Ovary (tissue), 10 donors: ENCODE measurements at regions of chr2 and their contacts with region 1.

Region 1: GRCh38 chr2:240851078-240851991 is 17.3 kb upstream of the AGXT start:
- DNase-seq: peak; percentile 76 to 90 (median 89)
- H3K4me3 ChIP-seq: no peak overlapping the region
- H3K27ac ChIP-seq: no peak overlapping the region
- H3K4me1 ChIP-seq: no peaks in the 10 kb centered on the region
- H3K27me3 ChIP-seq: no peaks in the 10 kb centered on the region
- CTCF ChIP-seq: peak; percentile 84 to 98 (median 86)
- EP300 ChIP-seq: no peak
- POLR2A ChIP-seq: no peak

Region 2: GRCh38 chr2:240560480-240561326 is 290.6 kb before region 1 on chr2:
- intact Hi-C with region 1: no loop called
- DNase-seq: peak; percentile 100
- H3K4me3 ChIP-seq: peak overlapping the region; percentile 98
- H3K27ac ChIP-seq: peak overlapping the region; percentile 97 to 98
- H3K4me1 ChIP-seq: peaks cover 23% of the 10 kb centered on the region
- H3K27me3 ChIP-seq: no peaks in the 10 kb centered on the region
- CTCF ChIP-seq: peak; percentile 23 to 46 (median 42)
- EP300 ChIP-seq: no peak
- POLR2A ChIP-seq: peak; percentile 48

Region 3: DNA sequence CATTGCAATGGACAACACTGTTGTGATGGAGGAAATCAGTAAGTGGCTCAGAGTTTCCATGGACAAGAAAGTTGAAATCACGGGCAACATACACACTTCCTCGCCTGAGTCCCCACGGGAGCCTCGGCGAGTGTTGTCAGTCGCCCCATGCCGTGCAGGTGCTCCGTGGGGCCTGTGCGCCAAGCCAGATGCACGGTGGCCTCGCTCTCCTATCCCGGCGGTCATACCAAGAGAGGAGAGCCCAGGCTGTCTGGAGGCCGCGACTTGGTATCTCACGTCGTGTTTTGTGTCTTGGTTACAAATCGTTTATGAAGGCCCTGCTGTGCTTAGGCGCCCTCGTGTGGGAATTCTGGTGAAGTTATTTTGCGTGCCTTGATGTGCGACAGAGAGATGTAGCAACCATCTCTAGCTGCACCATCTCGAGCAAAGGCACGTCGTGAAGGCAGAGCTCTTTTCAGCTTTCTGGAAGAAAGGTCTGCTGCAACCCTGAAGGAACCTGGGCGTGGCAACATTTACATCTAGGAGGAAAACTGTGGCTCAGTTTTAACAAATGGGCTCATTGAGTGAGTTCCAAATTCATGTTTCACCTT is 807.9 kb after region 1 on chr2:
- intact Hi-C with region 1: loop called in 3 of 4 experiments (anchors 2 to 10 kb)
- DNase-seq: peak; percentile 59 to 77 (median 68)
- H3K4me3 ChIP-seq: no peak overlapping the region
- H3K27ac ChIP-seq: no peak overlapping the region
- H3K4me1 ChIP-seq: no peaks in the 10 kb centered on the region
- H3K27me3 ChIP-seq: no peaks in the 10 kb centered on the region
- CTCF ChIP-seq: peak in 2 of 3 donors; percentile 38 to 48
- EP300 ChIP-seq: no peak
- POLR2A ChIP-seq: no peak